Activated T-helper 2 cell treated with anti-CD3 and anti-CD28 coated beads, Interferon-gamma antibody, Interleukin-2, Interleukin-4, amounts not matched to agents 10 μg/mL and 5 μg/mL and 100 μg/mL, durations not matched to agents 14 hours and 24 hours and 36 hours (primary cell): ENCODE measurements at regions of chr22 and their contacts with region 1.

Region 1: GRCh38 chr22:50200461-50201190 is at the start of gene SELENOO:
- DNase-seq: peak; percentile 88
- H3K4me3 Mint-ChIP-seq: peak within 1 kb of the TSS; percentile 83
- H3K27ac Mint-ChIP-seq: peak within 1 kb of the TSS; percentile 60
- H3K4me1 Mint-ChIP-seq: peaks cover 9% of the 10 kb centered on the region
- H3K27me3 Mint-ChIP-seq: no peaks in the 10 kb centered on the region
- total RNA-seq, gene SELENOO: 26.3 and 26.4 TPM in 2 replicates

Region 2: DNA sequence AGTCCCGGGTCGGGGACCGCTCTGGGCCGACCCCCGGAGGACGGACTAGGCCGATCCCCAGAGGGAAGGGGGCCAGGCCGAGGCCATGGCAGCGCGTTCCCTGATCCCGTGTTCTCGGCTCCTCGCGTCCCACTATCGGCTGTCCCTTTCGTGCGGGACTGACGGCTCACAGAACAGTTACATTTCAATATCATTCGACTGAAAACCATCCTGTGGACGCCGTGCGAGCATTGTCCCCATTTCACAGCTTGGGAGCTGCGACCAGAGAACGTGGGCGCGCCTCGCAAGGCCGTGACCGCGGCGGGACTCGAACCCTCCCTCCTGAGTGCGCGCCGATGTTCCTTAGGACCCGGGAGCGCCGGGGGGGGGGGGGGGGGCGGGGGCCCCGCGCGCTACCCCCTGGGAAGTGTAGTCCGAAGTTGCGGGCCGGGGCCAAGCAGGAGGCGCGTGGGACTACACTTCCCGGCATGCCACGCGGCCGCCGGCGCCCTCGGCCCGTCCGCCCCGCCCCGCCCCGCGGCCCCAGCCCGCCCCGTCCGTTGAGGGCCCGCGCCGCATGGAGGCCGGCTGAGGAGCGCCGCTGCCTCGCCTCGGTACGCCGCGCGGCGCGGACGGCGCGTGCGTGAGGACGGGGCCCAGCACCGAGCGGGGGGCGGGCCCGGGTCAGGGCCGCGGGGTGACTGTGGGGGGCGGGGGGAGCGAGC is 15.1 kb before region 1 on chr22 and contains the start of gene TRABD:
- intact Hi-C with region 1: loop called (anchors 2 kb)
- DNase-seq: peak; percentile 81
- H3K4me3 Mint-ChIP-seq: peak within 1 kb of the TSS; percentile 92
- H3K27ac Mint-ChIP-seq: peak within 1 kb of the TSS; percentile 91
- H3K4me1 Mint-ChIP-seq: peaks cover 17% of the 10 kb centered on the region
- H3K27me3 Mint-ChIP-seq: peaks cover 2% of the 10 kb centered on the region
- total RNA-seq, gene TRABD: 104 and 109 TPM in 2 replicates